ENCODE measurements at regions of chr4 and their contacts with region 1.

Region 1: DNA sequence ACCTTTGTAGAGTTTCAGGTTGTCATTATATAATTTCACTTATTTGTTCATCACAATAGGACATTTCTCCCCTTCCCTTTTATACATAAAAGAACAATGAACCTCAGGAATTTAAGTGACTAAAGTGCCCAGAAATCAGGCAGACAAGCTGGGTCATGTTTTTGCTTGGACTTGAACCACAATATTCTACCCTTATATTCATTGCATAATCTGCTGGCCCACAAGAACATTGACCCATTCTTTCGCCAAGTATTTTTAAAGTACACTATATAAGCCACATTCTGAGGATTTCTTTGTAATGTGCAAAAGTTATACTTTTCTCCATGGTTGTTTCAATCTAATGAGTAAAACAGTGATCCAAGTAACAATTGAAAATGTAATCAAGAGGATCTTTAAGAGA is 637.5 kb upstream of the SLIT2 start:
- DNase-seq: no peak
- H3K4me3 ChIP-seq: no peak overlapping the region
- H3K27ac ChIP-seq: no peak overlapping the region
- H3K4me1 ChIP-seq: no peaks in the 10 kb centered on the region
- H3K27me3 ChIP-seq: no peaks in the 10 kb centered on the region
- CTCF ChIP-seq: no peak
- POLR2A ChIP-seq: no peak

Region 2: GRCh38 chr4:18894928-18895327 is 719.2 kb before region 1 on chr4:
- intact Hi-C with region 1: loop called (anchors 10 kb)
- DNase-seq: no peak
- H3K4me3 ChIP-seq: no peak overlapping the region
- H3K27ac ChIP-seq: no peak overlapping the region
- H3K4me1 ChIP-seq: no peaks in the 10 kb centered on the region
- H3K27me3 ChIP-seq: no peaks in the 10 kb centered on the region
- CTCF ChIP-seq: no peak
- POLR2A ChIP-seq: no peak

Region 3: DNA sequence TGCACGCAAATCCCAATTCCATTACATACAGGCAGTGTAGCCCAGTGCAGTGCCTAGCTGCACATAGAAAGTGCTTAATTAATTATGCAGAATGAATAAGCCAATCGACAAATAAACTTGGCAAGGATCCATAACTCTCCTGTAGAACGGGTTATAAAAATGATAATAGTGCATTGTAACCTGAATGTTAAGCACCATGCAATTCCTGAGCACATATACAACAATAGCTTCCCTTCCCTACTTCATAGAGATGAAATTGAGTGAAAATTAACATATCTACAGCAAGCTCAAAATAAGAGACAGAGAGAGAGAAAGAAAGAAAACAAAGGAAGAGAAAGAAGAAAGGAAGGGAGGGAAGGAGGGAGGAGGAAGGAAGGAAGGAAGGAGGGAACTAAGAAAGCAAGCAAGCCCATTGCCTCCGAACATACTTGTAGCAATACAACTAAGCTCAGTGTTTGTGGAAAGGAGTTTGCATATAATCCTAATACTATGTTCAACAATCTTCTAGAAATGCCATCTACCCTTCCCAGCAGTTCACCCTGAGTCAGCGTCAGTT is 518.6 kb before region 1 on chr4:
- intact Hi-C with region 1: no loop called
- DNase-seq: no peak
- H3K4me3 ChIP-seq: no peak overlapping the region
- H3K27ac ChIP-seq: no peak overlapping the region
- H3K4me1 ChIP-seq: no peaks in the 10 kb centered on the region
- H3K27me3 ChIP-seq: no peaks in the 10 kb centered on the region
- CTCF ChIP-seq: no peak
- POLR2A ChIP-seq: no peak

Region 4: GRCh38 chr4:19478791-19479190 is 135.4 kb before region 1 on chr4:
- intact Hi-C with region 1: no loop called
- DNase-seq: no peak
- H3K4me3 ChIP-seq: no peak overlapping the region
- H3K27ac ChIP-seq: no peak overlapping the region
- H3K4me1 ChIP-seq: no peaks in the 10 kb centered on the region
- H3K27me3 ChIP-seq: no peaks in the 10 kb centered on the region
- CTCF ChIP-seq: no peak
- POLR2A ChIP-seq: no peak

Measured in vagina (tissue), 2 donors.